Kidney (tissue), 22 donors: ENCODE measurements at regions of chr4 and their contacts with region 1.

Region 1: GRCh38 chr4:6250235-6250983 is 19.2 kb upstream of the WFS1 start:
- DNase-seq: peak in 2 of 5 donors; percentile 89 to 90
- H3K4me3 ChIP-seq: no peak overlapping the region
- H3K27ac ChIP-seq: no peak overlapping the region
- H3K4me1 ChIP-seq: no peaks in the 10 kb centered on the region
- H3K27me3 ChIP-seq: peaks cover 2% of the 10 kb centered on the region
- CTCF ChIP-seq: peak; percentile 88

Region 2: DNA sequence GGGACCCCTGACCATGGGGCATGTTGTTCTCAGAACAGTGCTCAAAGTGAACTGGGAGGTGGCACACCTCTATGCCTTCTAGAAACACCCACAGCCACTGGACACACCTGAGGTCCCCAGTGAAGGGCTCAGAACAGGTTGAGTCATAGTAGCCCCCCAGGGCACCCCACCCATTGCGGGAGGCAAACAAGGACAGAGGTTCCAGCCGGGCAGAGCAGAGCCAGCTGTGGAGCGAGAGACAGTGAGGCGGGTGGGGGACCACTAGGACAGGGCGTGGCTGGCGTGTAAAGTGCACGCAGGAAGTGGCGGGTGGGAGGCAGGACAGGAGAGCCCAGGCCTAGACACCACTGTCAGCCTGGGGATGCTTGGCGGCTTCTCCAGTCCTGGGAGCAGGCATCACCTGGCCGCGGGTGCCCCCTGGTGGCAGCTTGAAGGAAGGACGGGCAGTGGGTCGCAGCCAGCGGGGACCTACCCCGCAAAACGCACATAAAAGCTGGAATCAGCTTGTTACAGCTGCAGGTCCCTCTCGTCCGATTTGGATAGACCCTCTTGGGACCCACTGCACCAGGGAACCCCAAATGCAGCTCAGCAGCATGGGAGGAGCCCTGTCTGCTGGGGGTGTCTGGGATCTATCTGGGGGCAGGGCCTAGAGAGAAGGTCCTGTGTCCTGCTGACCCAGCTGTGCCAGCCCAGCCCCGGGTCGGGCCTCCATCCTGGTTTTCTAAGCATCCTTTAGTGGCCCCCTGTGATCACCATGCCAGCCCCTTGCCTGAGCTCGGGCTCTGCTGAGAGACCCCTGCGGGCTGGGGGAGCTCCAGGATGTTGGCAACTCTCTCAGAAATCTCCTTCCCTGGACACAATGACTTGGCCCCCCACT is 76.9 kb after region 1 on chr4:
- intact Hi-C with region 1: loop called (anchors 5 kb)
- DNase-seq: peak; percentile 74 to 93 (median 86)
- H3K4me3 ChIP-seq: no peak overlapping the region
- H3K27ac ChIP-seq: no peak overlapping the region
- H3K4me1 ChIP-seq: no peaks in the 10 kb centered on the region
- H3K27me3 ChIP-seq: no peaks in the 10 kb centered on the region
- CTCF ChIP-seq: peak; percentile 97